ENCODE measurements at regions of chr7 and their contacts with region 1.

Region 1: DNA sequence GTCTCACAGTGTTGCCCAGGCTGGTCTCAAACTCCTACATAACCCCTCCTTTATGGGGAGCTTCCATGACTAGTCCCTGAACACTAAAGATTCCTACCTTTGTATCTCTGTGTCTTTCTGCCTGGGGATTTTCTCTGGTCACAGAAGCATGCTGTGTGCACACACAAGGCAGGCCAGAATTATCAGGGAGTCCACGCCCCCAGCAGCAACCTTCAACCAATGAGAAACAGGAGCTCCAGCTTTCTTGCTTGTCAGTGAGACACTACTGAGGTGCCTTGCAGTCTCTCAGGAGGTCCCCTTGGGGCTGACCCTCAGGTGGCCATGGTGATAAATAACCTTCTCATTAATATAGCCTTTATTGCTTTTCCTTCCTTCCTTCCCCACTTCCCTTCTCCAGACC is 45.1 kb upstream of the AUTS2 start:
- DNase-seq: no peak
- CTCF ChIP-seq: no peak

Region 2: GRCh38 chr7:69537691-69538090 is 15.5 kb before region 1 on chr7:
- CTCF ChIA-PET with region 1: interaction called, 10 read pairs
- POLR2A ChIA-PET with region 1: no interaction called
- DNase-seq: no peak
- CTCF ChIP-seq: no peak

Measured in GM10248 (cell line).